CD8-positive, alpha-beta T cell (primary cell): ENCODE measurements at regions of chr2 and their contacts with region 1.

Region 1: DNA sequence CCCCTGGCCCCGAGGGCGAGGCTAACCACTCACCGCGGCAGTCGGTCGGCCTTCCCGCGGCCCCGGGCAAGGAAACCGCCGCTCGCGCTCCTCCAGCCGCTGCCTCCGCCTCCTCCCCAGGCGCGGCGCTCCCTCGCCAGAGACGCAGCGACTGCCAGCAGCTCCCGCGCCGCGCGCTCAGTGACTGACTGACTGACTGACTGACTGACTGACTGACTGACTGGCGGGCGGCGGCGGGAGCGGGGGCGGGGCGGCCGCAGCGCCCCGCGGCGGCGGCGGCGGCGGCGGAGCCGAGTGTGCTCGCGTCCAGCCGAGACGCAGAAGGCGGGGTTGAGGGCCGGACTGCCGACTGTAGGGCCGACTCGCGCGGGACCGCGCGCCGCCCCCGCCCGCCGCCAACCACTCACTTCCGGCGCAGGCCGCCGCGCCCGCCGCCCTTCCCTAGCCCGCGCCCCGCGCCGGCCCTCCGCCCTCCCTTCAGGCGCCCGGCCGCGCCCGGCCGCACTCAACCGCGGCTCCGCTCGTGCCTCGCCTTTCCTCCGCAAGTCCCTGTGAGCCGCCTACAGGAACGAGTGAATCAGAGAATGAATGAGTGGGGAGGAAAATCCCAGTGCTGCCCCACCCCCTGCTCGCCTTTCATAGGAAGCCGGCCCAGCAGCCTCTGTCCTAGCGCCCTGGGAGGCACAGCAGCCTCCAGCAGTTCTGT is at the start of gene RAPH1:
- DNase-seq: peak; percentile 3 to 65 (median 54)
- ATAC-seq: peak; percentile 62
- H3K4me3 ChIP-seq: peak within 1 kb of the TSS; percentile 49 to 50
- H3K4me3 Mint-ChIP-seq: peak within 1 kb of the TSS; percentile 86
- H3K27ac ChIP-seq: no peak within 1 kb of the TSS
- H3K27ac Mint-ChIP-seq: no peak within 1 kb of the TSS
- H3K4me1 ChIP-seq: peaks cover 15% of the 10 kb centered on the region
- H3K4me1 Mint-ChIP-seq: peaks cover 27% of the 10 kb centered on the region
- H3K27me3 ChIP-seq: peaks cover 0 to 7% of the 10 kb centered on the region in 2 experiments
- H3K27me3 Mint-ChIP-seq: peaks cover 28% of the 10 kb centered on the region
- CTCF ChIP-seq: no peak
- total RNA-seq, gene RAPH1: 1.8 to 1.9 TPM

Region 2: DNA sequence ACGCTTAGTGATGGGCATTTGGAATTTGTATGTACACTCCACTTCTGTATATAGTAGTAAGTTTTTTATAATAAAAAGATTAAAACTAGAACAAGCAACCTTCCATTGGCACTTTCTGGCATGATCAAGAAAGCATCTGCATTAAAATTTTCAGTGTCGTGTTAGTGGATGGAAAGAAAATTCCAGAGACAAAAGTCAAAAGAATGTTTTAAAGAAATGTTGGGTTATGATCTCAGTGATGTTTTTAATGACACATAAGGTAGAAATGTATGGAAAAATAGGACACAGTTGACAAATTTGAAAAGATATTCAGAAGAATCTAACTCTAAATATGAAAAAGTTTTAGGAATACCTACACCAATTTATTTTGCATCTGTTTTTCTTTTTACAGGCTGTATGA is 1026.5 kb before region 1 on chr2:
- CTCF ChIA-PET with region 1: no interaction called
- POLR2A ChIA-PET with region 1: no interaction called
- intact Hi-C with region 1: no loop called
- DNase-seq: no peak
- ATAC-seq: no peak
- H3K4me3 ChIP-seq: no peak overlapping the region
- H3K4me3 Mint-ChIP-seq: no peak overlapping the region
- H3K27ac ChIP-seq: no peak overlapping the region
- H3K27ac Mint-ChIP-seq: no peak overlapping the region
- H3K4me1 ChIP-seq: no peaks in the 10 kb centered on the region
- H3K4me1 Mint-ChIP-seq: peaks cover 3% of the 10 kb centered on the region
- H3K27me3 ChIP-seq: no peaks in the 10 kb centered on the region
- H3K27me3 Mint-ChIP-seq: no peaks in the 10 kb centered on the region
- CTCF ChIP-seq: no peak

Region 3: GRCh38 chr2:203498161-203498560 is 37.1 kb before region 1 on chr2:
- CTCF ChIA-PET with region 1: no interaction called
- POLR2A ChIA-PET with region 1: no interaction called
- intact Hi-C with region 1: loop called in 1 of 2 experiments (anchors 5 kb)
- DNase-seq: peak in 1 of 9 experiments; percentile 23
- ATAC-seq: no peak
- H3K4me3 ChIP-seq: no peak overlapping the region
- H3K4me3 Mint-ChIP-seq: no peak overlapping the region
- H3K27ac ChIP-seq: no peak overlapping the region
- H3K27ac Mint-ChIP-seq: no peak overlapping the region
- H3K4me1 ChIP-seq: no peaks in the 10 kb centered on the region
- H3K4me1 Mint-ChIP-seq: peaks cover 16% of the 10 kb centered on the region
- H3K27me3 ChIP-seq: no peaks in the 10 kb centered on the region
- H3K27me3 Mint-ChIP-seq: no peaks in the 10 kb centered on the region
- CTCF ChIP-seq: no peak

Region 4: DNA sequence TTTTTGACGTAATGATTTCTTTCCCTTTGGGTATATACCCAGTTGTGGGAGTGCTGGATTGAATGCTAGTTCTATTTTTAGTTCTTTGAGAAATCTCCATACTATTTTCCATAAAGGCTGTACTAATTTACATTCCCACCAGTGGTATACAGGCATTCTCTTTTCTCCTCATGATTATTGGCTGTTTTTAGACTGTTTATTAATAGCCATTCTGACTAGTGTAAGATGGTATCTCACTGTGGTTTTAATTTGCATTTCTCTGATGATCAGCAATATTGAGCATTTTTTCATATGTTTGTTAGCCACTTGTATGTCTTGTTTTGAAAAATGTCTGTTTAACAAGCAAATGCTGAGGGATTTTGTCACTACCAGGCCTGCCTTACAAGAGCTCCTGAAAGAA is 162.0 kb after region 1 on chr2:
- CTCF ChIA-PET with region 1: no interaction called
- POLR2A ChIA-PET with region 1: no interaction called
- intact Hi-C with region 1: loop called in 1 of 2 experiments (anchors 5 kb)
- DNase-seq: no peak
- ATAC-seq: no peak
- H3K4me3 ChIP-seq: no peak overlapping the region
- H3K4me3 Mint-ChIP-seq: no peak overlapping the region
- H3K27ac ChIP-seq: no peak overlapping the region
- H3K27ac Mint-ChIP-seq: no peak overlapping the region
- H3K4me1 ChIP-seq: no peaks in the 10 kb centered on the region
- H3K4me1 Mint-ChIP-seq: peaks cover 9% of the 10 kb centered on the region
- H3K27me3 ChIP-seq: no peaks in the 10 kb centered on the region
- H3K27me3 Mint-ChIP-seq: no peaks in the 10 kb centered on the region
- CTCF ChIP-seq: no peak